ENCODE measurements at regions of chr1 and their contacts with region 1.

Region 1: DNA sequence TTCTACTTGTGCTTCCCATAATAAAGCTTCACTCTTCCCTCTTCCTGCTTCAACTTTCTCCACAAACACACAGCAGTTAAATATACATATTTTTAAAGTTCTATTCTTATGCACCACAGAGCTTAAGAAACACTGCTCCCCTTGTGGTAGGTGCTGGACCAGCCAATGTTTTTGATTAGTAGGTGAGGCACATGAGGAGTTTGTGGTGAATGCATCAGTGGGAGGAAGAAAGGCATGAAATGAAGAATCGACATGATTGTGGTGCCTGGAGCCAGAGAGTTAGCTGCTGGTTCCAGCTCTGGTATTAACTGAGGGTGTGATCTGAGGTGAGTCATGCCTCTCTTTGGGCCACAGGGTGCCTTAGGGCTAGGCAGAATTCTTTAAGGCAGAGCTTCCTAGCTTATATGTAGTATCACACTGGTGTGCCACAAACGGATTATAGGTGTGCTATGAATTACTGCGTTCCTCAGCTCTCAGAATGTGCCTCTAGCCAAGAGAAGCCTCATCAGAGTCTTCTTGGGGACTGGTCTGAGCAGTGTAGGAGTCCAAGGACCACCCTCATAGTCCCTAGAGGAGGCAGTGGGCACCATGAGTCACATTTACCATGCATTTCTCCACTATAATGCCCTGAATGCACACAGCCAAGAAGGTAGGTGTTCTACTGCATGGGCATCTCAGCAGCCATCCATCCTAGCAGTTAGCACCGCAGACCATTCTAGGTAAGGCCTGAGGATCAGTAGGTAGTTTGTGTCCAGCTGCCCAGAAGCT is 97.4 kb upstream of the SGIP1 start:
- H3K4me3 Mint-ChIP-seq: no peak overlapping the region
- H3K27ac Mint-ChIP-seq: no peak overlapping the region
- H3K4me1 Mint-ChIP-seq: peaks cover 13% of the 10 kb centered on the region
- H3K27me3 Mint-ChIP-seq: no peaks in the 10 kb centered on the region

Region 2: GRCh38 chr1:65812065-65812464 is 624.5 kb before region 1 on chr1:
- intact Hi-C with region 1: loop called (anchors 10 kb)
- H3K4me3 Mint-ChIP-seq: peak overlapping the region; percentile 45
- H3K27ac Mint-ChIP-seq: no peak overlapping the region
- H3K4me1 Mint-ChIP-seq: peaks cover 13% of the 10 kb centered on the region
- H3K27me3 Mint-ChIP-seq: no peaks in the 10 kb centered on the region

Region 3: GRCh38 chr1:66380452-66381212 is 55.9 kb before region 1 on chr1:
- intact Hi-C with region 1: loop called (anchors 1 kb)
- H3K4me3 Mint-ChIP-seq: no peak overlapping the region
- H3K27ac Mint-ChIP-seq: peak overlapping the region; percentile 22
- H3K4me1 Mint-ChIP-seq: peaks cover 74% of the 10 kb centered on the region
- H3K27me3 Mint-ChIP-seq: peaks cover 21% of the 10 kb centered on the region

Region 4: DNA sequence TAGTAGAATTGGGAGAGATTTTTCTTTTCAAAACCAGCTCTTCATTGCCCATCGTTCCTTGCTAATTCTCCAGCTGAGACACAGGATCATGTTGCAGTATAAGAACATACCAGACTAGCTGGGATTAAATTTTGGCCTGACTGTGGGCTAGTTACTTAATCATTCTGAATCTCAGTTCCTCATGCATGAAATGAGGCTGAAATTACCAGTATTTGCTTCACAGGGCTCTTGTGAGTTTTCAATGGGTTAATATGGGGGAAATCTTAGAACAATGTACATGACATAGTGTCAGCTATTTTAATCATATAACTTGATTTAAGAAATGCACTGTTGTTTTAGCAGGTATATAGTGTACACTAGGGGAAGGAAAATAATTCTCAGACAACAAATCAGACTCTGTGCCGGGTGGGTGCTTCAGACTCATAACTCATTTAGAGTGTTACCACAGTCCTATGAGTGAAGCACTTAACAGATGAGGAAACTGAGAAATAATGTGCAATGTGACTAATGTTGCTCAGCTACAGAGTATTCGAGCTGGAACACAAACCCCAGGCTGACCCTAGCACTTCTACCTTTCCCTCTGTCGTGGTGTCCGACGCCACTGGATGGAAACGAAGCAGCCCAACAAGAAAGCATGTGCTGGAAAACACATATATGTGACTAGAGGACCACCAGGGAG is 40.2 kb before region 1 on chr1:
- intact Hi-C with region 1: loop called (anchors 5 kb)
- H3K4me3 Mint-ChIP-seq: peak overlapping the region; percentile 10
- H3K27ac Mint-ChIP-seq: peak overlapping the region; percentile 65
- H3K4me1 Mint-ChIP-seq: peaks cover 75% of the 10 kb centered on the region
- H3K27me3 Mint-ChIP-seq: peaks cover 11% of the 10 kb centered on the region

Measured in dendritic cell treated with granulocyte-macrophage colony-stimulating factor and Interleukin-4, amounts not matched to agents 40 ng/mL and 50 ng/mL, for 4 days (primary cell).